Aorta (tissue), 5 donors: ENCODE measurements at regions of chr13 and their contacts with region 1.

Region 1: DNA sequence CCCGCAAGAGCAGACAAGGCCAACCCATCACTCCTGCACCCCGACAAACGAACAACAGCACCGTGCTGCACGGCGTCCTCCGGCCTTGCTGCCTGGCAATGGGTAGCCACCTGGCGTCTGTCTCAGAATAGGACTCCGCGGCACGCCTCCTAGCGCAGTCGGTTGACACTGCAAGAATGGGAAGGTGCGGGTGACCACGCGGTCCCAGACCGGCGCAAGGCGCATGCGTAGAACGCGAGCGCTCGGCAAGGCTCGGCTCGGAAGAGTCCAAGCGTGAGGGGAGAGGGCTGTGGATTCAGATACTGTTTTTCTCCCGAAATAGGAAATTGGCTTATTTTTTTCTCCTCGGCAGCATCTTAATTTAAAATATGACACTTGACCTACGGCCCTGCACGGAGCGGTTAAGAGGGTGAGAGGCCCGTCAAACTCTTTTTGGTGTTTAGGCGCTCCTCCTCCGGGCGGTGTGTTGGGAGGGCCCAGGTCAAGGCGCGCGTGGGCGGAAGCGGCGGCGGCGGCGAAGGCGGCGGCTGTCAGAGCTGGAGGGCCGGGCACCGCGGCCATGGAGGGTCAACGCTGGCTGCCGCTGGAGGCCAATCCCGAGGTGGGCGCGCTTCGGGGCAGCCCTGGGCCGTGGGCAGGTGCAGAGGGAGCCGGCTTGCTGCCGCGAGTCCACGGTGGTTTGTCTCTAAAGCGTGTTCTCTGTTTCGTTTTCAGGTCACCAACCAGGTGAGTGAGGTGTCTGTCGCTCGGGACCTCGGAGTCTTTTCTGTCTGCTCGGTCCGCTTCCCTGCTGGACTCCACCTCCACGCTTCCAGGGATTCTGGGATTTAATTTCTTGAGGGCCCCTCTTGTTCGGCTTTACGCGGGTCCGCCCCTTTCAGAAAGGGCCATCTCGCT is at the start of gene UCHL3:
- DNase-seq: peak; percentile 97 to 99
- ATAC-seq: peak; percentile 99
- H3K4me3 ChIP-seq: peak within 1 kb of the TSS; percentile 62 to 86
- H3K27ac ChIP-seq: no peak within 1 kb of the TSS
- H3K4me1 ChIP-seq: no peaks in the 10 kb centered on the region
- H3K27me3 ChIP-seq: no peaks in the 10 kb centered on the region
- total RNA-seq, gene UCHL3: 21.5 to 24.7 TPM

Region 2: GRCh38 chr13:75365724-75366173 is 183.8 kb before region 1 on chr13:
- intact Hi-C with region 1: loop called in 1 of 2 experiments (anchors 5 kb)
- DNase-seq: no peak
- ATAC-seq: no peak
- H3K4me3 ChIP-seq: no peak overlapping the region
- H3K27ac ChIP-seq: no peak overlapping the region
- H3K4me1 ChIP-seq: no peaks in the 10 kb centered on the region
- H3K27me3 ChIP-seq: no peaks in the 10 kb centered on the region

Region 3: GRCh38 chr13:75372517-75372916 is 177.0 kb before region 1 on chr13:
- intact Hi-C with region 1: loop called (anchors 2 to 5 kb)
- DNase-seq: no peak
- ATAC-seq: peak; percentile 82
- H3K4me3 ChIP-seq: no peak overlapping the region
- H3K27ac ChIP-seq: no peak overlapping the region
- H3K4me1 ChIP-seq: no peaks in the 10 kb centered on the region
- H3K27me3 ChIP-seq: no peaks in the 10 kb centered on the region

Region 4: GRCh38 chr13:75621147-75621546 is 71.6 kb after region 1 on chr13:
- intact Hi-C with region 1: loop called in 1 of 2 experiments (anchors 2 kb)
- DNase-seq: no peak
- ATAC-seq: no peak
- H3K4me3 ChIP-seq: no peak overlapping the region
- H3K27ac ChIP-seq: no peak overlapping the region
- H3K4me1 ChIP-seq: peaks cover 0 to 2% of the 10 kb centered on the region in 2 donors
- H3K27me3 ChIP-seq: no peaks in the 10 kb centered on the region

Region 5: DNA sequence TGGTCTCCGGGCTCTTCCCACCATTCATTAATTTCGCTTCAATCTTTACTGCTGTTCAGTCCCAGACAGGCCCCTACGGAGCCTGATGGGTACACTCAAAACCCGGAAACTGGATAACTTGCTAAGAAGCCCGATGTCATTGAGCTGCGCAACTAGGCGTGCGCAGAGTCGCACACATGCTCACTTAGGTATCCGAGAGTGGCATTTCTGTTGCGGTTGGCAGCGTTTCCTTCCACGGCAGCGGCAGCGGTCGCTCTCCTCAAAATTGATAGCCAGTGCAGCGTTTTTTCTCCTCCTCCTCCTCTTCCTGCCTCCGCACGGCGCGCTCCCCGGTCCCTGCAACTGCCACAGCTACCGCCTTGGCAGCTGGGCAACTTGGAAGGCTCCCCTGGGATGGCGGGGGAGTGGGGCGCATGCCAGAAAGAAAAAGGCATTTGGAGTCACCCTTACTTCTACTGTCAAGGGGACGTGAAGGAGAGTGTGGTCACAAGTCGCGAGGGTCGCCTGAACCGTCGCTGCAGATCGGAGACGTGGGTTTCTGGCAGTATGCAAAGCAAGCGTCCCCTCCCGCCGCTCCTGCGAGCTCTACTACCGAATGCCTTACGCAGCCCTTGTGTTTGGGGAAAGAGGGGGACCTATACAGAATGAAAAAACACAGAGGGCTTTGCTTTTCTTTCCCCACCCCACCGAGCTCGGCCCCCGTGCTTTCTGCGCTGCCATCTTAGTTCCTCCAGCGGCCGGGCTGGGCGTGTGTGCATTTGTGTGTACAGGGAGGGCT is 1779.8 kb after region 1 on chr13:
- intact Hi-C with region 1: loop called in 1 of 2 experiments (anchors 5 kb)
- DNase-seq: peak; percentile 91 to 92
- ATAC-seq: peak; percentile 89
- H3K4me3 ChIP-seq: peak overlapping the region; percentile 35 to 76
- H3K27ac ChIP-seq: peak overlapping the region in 1 of 2 donors; percentile 58
- H3K4me1 ChIP-seq: no peaks in the 10 kb centered on the region
- H3K27me3 ChIP-seq: no peaks in the 10 kb centered on the region